HCT116 (cell line): ENCODE measurements at regions of chr2 and their contacts with region 1.

Region 1: DNA sequence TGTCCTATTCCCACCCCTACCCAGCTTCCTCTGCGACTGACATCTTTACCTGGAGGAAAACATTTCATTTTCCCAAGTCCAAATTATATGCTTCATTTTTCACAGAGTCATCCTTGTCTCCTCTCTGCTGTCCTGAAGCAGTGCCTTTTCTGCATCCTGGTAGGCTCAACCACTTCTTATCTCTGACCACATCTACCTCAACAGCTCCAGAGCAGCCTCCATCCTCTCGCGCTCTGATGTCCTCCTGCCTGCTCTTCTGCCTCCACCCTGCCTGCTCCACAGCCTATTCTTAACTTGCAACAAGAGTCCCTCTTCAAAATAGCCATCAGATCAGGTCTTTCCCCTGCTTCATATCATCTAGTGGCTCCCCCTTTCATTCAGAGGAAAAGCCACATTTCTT is 457.1 kb downstream of the PARD3B start:
- DNase-seq: no peak
- ATAC-seq: no peak
- H3K4me3 ChIP-seq: no peak overlapping the region
- H3K27ac ChIP-seq: no peak overlapping the region
- H3K4me1 ChIP-seq: no peaks in the 10 kb centered on the region
- H3K27me3 ChIP-seq: no peaks in the 10 kb centered on the region
- CTCF ChIP-seq: no peak
- POLR2A ChIP-seq: no peak
- RAD21 ChIP-seq: no peak

Region 2: GRCh38 chr2:204989877-204990276 is 12.5 kb before region 1 on chr2:
- CTCF ChIA-PET with region 1: no interaction called
- POLR2A ChIA-PET with region 1: no interaction called
- RAD21 ChIA-PET with region 1: no interaction called
- intact Hi-C with region 1: loop called (anchors 1 kb)
- DNase-seq: no peak
- ATAC-seq: no peak
- H3K4me3 ChIP-seq: no peak overlapping the region
- H3K27ac ChIP-seq: no peak overlapping the region
- H3K4me1 ChIP-seq: no peaks in the 10 kb centered on the region
- H3K27me3 ChIP-seq: no peaks in the 10 kb centered on the region
- CTCF ChIP-seq: no peak
- POLR2A ChIP-seq: no peak
- RAD21 ChIP-seq: no peak